B cell (primary cell): ENCODE measurements at regions of chr2 and their contacts with region 1.

Region 1: GRCh38 chr2:111157798-111158197 is 37.1 kb downstream of the BCL2L11 start:
- DNase-seq: peak; percentile 79
- ATAC-seq: peak; percentile 66
- H3K4me3 ChIP-seq: no peak overlapping the region
- H3K4me3 Mint-ChIP-seq: peak overlapping the region; percentile 77
- H3K27ac ChIP-seq: peak overlapping the region; percentile 42 to 73
- H3K27ac Mint-ChIP-seq: peak overlapping the region; percentile 94
- H3K4me1 ChIP-seq: peaks cover 26 to 30% of the 10 kb centered on the region in 2 donors
- H3K4me1 Mint-ChIP-seq: peaks cover 61% of the 10 kb centered on the region
- H3K27me3 ChIP-seq: no peaks in the 10 kb centered on the region
- H3K27me3 Mint-ChIP-seq: no peaks in the 10 kb centered on the region
- CTCF ChIP-seq: no peak

Region 2: GRCh38 chr2:110958346-110959119 is 199.3 kb before region 1 on chr2:
- CTCF ChIA-PET with region 1: no interaction called
- POLR2A ChIA-PET with region 1: no interaction called
- intact Hi-C with region 1: no loop called
- DNase-seq: no peak
- ATAC-seq: no peak
- H3K4me3 ChIP-seq: no peak overlapping the region
- H3K4me3 Mint-ChIP-seq: no peak overlapping the region
- H3K27ac ChIP-seq: no peak overlapping the region
- H3K27ac Mint-ChIP-seq: no peak overlapping the region
- H3K4me1 ChIP-seq: no peaks in the 10 kb centered on the region
- H3K4me1 Mint-ChIP-seq: no peaks in the 10 kb centered on the region
- H3K27me3 ChIP-seq: peaks cover 0 to 3% (median under 1%) of the 10 kb centered on the region in 4 experiments
- H3K27me3 Mint-ChIP-seq: peaks cover 18% of the 10 kb centered on the region
- CTCF ChIP-seq: no peak

Region 3: GRCh38 chr2:111201214-111201613 is 43.4 kb after region 1 on chr2:
- CTCF ChIA-PET with region 1: no interaction called
- POLR2A ChIA-PET with region 1: no interaction called
- intact Hi-C with region 1: loop called (anchors 2 kb)
- DNase-seq: peak; percentile 52
- ATAC-seq: peak; percentile 81
- H3K4me3 ChIP-seq: no peak overlapping the region
- H3K4me3 Mint-ChIP-seq: no peak overlapping the region
- H3K27ac ChIP-seq: no peak overlapping the region
- H3K27ac Mint-ChIP-seq: no peak overlapping the region
- H3K4me1 ChIP-seq: peaks cover 3 to 23% of the 10 kb centered on the region in 2 donors
- H3K4me1 Mint-ChIP-seq: peaks cover 29% of the 10 kb centered on the region
- H3K27me3 ChIP-seq: no peaks in the 10 kb centered on the region
- H3K27me3 Mint-ChIP-seq: no peaks in the 10 kb centered on the region
- CTCF ChIP-seq: no peak

Region 4: DNA sequence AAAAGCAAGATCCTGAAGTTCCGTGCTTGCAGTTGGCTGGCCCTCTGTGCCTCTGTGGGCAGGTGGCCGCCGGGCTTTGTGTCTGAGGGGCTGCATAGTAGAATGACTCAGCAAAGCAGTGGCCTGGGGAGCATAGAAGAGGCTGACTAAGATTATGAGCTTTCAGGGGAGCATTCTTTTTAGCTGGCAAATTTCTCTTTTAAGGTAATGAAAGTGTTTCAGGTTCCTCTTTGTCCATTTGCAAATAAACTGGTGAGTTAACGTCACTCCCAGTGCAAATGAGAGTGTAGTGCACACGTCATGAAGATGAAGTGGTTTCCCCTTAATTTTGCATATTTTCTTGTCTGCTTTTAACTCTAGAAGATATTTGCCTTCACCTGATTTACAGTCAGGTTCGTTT is 61.5 kb after region 1 on chr2:
- CTCF ChIA-PET with region 1: interaction called, 5 read pairs
- POLR2A ChIA-PET with region 1: interaction called, 3 read pairs
- intact Hi-C with region 1: loop called (anchors 2 kb)
- DNase-seq: peak; percentile 83
- ATAC-seq: peak; percentile 81
- H3K4me3 ChIP-seq: peak overlapping the region in 1 of 5 experiments; percentile 25
- H3K4me3 Mint-ChIP-seq: peak overlapping the region; percentile 81
- H3K27ac ChIP-seq: peak overlapping the region in 1 of 2 donors; percentile 10
- H3K27ac Mint-ChIP-seq: peak overlapping the region; percentile 88
- H3K4me1 ChIP-seq: peaks cover 23 to 27% of the 10 kb centered on the region in 2 donors
- H3K4me1 Mint-ChIP-seq: peaks cover 41% of the 10 kb centered on the region
- H3K27me3 ChIP-seq: no peaks in the 10 kb centered on the region
- H3K27me3 Mint-ChIP-seq: peaks cover 8% of the 10 kb centered on the region
- CTCF ChIP-seq: no peak

Region 5: DNA sequence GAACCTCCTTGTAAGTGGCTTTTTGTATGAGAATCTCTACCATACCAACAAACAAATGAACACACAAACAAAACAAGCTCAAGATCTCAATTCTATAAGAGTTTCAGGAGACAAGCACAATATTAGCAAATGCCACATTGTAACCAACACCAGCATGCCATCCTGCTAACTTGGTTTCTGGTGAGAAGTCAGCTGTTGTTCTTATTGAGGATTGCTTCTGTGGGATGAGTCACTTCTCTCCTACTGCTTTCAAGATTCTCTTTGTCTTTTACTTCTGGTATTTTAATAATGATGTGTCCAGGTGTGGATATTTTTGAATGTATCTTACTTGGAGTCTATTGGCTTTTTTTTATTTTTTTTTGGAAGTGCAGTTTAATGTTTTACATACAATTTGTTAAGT is 94.6 kb after region 1 on chr2:
- CTCF ChIA-PET with region 1: no interaction called
- POLR2A ChIA-PET with region 1: no interaction called
- intact Hi-C with region 1: no loop called
- DNase-seq: no peak
- ATAC-seq: no peak
- H3K4me3 ChIP-seq: no peak overlapping the region
- H3K4me3 Mint-ChIP-seq: no peak overlapping the region
- H3K27ac ChIP-seq: no peak overlapping the region
- H3K27ac Mint-ChIP-seq: no peak overlapping the region
- H3K4me1 ChIP-seq: no peaks in the 10 kb centered on the region
- H3K4me1 Mint-ChIP-seq: no peaks in the 10 kb centered on the region
- H3K27me3 ChIP-seq: no peaks in the 10 kb centered on the region
- H3K27me3 Mint-ChIP-seq: no peaks in the 10 kb centered on the region
- CTCF ChIP-seq: no peak